Activated T-helper 1 cell treated with anti-CD3 and anti-CD28 coated beads, Interleukin-12 subunit alpha, Interleukin-12 subunit beta, Interleukin-2, Interleukin-4 antibody, amounts not matched to agents 30 ng/mL and 10 ng/mL and 1 ng/mL, durations not matched to agents 14 hours and 24 hours and 36 hours (primary cell): ENCODE measurements at regions of chr10 and their contacts with region 1.

Region 1: GRCh38 chr10:8238986-8239385 is 184.5 kb downstream of the GATA3 start:
- DNase-seq: peak; percentile 37
- H3K4me3 Mint-ChIP-seq: peak overlapping the region; percentile 41
- H3K27ac Mint-ChIP-seq: peak overlapping the region; percentile 75
- H3K4me1 Mint-ChIP-seq: peaks cover 66% of the 10 kb centered on the region
- H3K27me3 Mint-ChIP-seq: no peaks in the 10 kb centered on the region

Region 2: GRCh38 chr10:8065651-8066050 is 173.3 kb before region 1 on chr10:
- intact Hi-C with region 1: loop called (anchors 1 kb)
- DNase-seq: no peak
- H3K4me3 Mint-ChIP-seq: peak overlapping the region; percentile 77
- H3K27ac Mint-ChIP-seq: peak overlapping the region; percentile 88
- H3K4me1 Mint-ChIP-seq: peaks cover 92% of the 10 kb centered on the region
- H3K27me3 Mint-ChIP-seq: peaks cover 2% of the 10 kb centered on the region

Region 3: GRCh38 chr10:8112226-8112905 is 126.6 kb before region 1 on chr10:
- intact Hi-C with region 1: no loop called
- DNase-seq: no peak
- H3K4me3 Mint-ChIP-seq: no peak overlapping the region
- H3K27ac Mint-ChIP-seq: no peak overlapping the region
- H3K4me1 Mint-ChIP-seq: no peaks in the 10 kb centered on the region
- H3K27me3 Mint-ChIP-seq: peaks cover 11% of the 10 kb centered on the region

Region 4: GRCh38 chr10:8183241-8183704 is 55.7 kb before region 1 on chr10:
- intact Hi-C with region 1: loop called (anchors 5 kb)
- DNase-seq: peak; percentile 27
- H3K4me3 Mint-ChIP-seq: peak overlapping the region; percentile 27
- H3K27ac Mint-ChIP-seq: peak overlapping the region; percentile 13
- H3K4me1 Mint-ChIP-seq: peaks cover 23% of the 10 kb centered on the region
- H3K27me3 Mint-ChIP-seq: peaks cover 11% of the 10 kb centered on the region

Region 5: GRCh38 chr10:8325024-8325980 is 86.3 kb after region 1 on chr10:
- intact Hi-C with region 1: loop called (anchors 1 kb)
- DNase-seq: no peak
- H3K4me3 Mint-ChIP-seq: peak overlapping the region; percentile 63
- H3K27ac Mint-ChIP-seq: peak overlapping the region; percentile 85
- H3K4me1 Mint-ChIP-seq: peaks cover 57% of the 10 kb centered on the region
- H3K27me3 Mint-ChIP-seq: peaks cover 15% of the 10 kb centered on the region

Region 6: GRCh38 chr10:8338177-8338766 is 99.3 kb after region 1 on chr10:
- intact Hi-C with region 1: loop called (anchors 1 kb)
- DNase-seq: no peak
- H3K4me3 Mint-ChIP-seq: no peak overlapping the region
- H3K27ac Mint-ChIP-seq: peak overlapping the region; percentile 90
- H3K4me1 Mint-ChIP-seq: peaks cover 25% of the 10 kb centered on the region
- H3K27me3 Mint-ChIP-seq: peaks cover 19% of the 10 kb centered on the region

Region 7: DNA sequence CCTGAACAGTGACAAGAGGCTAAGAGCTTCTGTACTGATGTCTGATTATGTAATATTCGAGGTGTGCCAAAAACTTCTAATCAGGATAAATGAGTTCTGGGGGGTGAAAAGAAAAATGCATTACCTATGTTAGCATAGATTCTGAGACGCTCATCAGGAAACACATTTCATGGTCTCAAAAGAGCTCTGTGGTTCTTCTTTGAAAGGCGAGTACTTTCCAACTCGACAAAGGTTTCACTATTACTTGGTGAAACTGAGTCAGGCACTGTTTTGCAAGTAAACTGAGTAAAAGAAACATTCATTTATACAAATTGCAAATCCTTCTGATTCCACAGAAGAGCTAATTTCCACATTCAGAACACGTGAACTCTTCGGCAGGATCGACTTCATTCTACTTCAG is 338.7 kb after region 1 on chr10:
- intact Hi-C with region 1: loop called (anchors 5 kb)
- DNase-seq: no peak
- H3K4me3 Mint-ChIP-seq: peak overlapping the region; percentile 27
- H3K27ac Mint-ChIP-seq: peak overlapping the region; percentile 64
- H3K4me1 Mint-ChIP-seq: peaks cover 40% of the 10 kb centered on the region
- H3K27me3 Mint-ChIP-seq: peaks cover 3% of the 10 kb centered on the region